A549 (cell line): ENCODE measurements at regions of chr2 and their contacts with region 1.

Region 1: DNA sequence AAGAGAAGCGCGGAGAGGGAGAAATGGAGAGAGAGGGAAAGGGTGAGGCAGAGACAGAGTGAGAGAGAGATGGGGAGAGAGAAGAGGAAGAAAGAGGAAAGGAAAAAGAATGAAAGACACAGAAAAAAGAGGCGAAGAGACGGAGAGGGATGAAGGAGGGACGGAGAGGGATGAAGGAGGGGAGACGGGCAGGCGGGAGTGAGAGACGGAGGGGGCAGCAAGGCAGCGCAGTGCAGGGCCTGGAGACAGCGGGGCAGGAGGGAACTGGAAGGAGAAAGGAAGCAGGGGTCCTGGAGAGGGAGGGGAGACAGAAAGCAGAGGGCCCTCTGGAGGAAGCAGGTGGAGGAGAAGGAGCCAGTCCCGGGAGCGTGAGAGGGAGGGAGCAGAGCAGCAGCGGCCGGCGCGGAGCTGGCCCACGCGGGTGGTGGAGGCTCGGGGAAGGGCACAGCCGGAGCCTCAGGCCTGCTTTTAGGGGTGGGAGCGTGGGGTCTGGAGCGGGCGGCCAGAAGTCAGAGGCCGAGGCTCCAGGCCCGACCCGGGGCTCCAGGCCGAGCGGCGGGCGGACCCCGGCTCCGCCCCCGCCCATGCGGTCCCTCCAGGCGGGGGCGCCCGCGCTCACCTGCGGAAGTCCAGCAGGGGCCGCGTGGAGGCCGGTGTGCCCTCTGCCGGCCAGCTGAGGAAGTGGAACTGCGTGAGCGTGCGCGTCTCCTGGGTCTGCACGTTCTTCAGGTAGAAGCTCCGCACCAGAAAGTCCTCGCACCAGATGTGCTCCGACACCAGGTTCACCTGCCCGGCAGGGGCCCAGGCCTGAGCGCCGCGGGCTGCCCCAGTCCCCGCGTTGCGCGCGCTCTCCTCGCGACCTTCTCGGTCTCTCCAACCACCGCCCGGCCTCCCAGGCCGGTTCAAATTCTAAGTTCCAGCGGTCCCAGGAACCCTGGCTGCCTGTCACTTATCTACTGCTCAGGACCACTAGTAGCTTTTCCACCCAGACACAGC is 14.5 kb downstream of the PTPRN start:
- DNase-seq: peak; percentile 87 to 91
- ATAC-seq: peak; percentile 69 to 89
- H3K4me3 ChIP-seq: peak overlapping the region; percentile 48
- H3K27ac ChIP-seq: peak overlapping the region; percentile 94 to 99
- H3K4me1 ChIP-seq: peaks cover 23% of the 10 kb centered on the region
- CTCF ChIP-seq: peak; percentile 100
- EP300 ChIP-seq: 0 out of 5 replicates have a peak, but pooled peaks of 1 of the 2 experiments have one; percentile 10
- POLR2A ChIP-seq: peak; percentile 56
- RAD21 ChIP-seq: peak; percentile 74 to 93

Region 2: DNA sequence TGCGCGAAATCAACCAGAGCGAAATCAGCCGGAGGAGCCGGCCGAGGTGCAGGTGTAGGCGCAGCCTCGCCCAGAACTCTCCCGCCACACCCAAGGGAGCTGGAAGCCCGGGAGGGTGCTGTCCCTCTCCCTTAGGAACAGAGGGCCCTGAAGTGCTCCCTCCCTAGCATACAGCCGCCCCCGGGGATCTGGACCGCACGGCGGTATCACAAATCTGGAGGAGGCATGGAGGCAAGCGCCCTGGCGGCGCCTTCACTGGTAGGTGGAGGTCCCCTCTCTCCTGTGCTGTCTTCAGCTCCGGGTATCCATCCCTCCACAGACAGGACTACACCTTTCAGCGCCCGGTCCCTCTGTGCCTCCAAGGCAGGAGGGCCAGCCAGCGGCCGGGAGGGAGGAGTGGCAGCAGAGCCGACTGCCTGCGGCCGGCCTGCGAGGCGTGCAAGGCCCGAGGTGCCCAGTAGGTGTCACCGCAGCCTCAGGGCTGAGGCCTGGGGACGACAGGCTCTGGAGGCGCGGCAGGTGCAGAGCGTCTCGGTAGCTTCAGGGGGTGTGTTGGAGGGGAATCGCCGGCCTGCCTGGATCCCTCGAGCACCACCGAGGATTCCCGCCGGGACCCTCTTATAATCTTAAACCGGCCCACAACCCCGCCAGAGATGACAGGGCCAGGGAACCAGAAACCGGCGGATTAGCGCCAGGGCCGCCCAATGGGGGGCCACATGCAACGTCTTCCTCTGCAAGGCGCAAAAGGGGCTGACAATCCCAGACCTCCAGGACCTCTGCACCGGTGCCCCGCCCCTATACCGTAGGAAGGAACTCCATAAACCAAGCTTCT is 236.7 kb before region 1 on chr2:
- CTCF ChIA-PET with region 1: interaction called, 14 read pairs
- POLR2A ChIA-PET with region 1: no interaction called
- DNase-seq: peak in 1 of 2 experiments; percentile 60
- ATAC-seq: peak; percentile 72 to 86
- H3K4me3 ChIP-seq: peak overlapping the region; percentile 53; the same call in 2 of the 3 replicates
- H3K27ac ChIP-seq: no peak overlapping the region
- H3K4me1 ChIP-seq: peaks cover 26% of the 10 kb centered on the region
- CTCF ChIP-seq: peak; percentile 80
- EP300 ChIP-seq: no peak
- POLR2A ChIP-seq: no peak
- RAD21 ChIP-seq: peak; percentile 80 to 91

Region 3: GRCh38 chr2:219199470-219200211 is 95.0 kb before region 1 on chr2:
- CTCF ChIA-PET with region 1: interaction called, 15 read pairs
- POLR2A ChIA-PET with region 1: no interaction called
- DNase-seq: no peak
- ATAC-seq: peak in 1 of 2 experiments; percentile 16; a peak in 1 of 6 replicates
- H3K4me3 ChIP-seq: no peak overlapping the region
- H3K27ac ChIP-seq: no peak overlapping the region
- H3K4me1 ChIP-seq: no peaks in the 10 kb centered on the region
- CTCF ChIP-seq: no peak
- EP300 ChIP-seq: no peak
- POLR2A ChIP-seq: no peak
- RAD21 ChIP-seq: no peak

Region 4: DNA sequence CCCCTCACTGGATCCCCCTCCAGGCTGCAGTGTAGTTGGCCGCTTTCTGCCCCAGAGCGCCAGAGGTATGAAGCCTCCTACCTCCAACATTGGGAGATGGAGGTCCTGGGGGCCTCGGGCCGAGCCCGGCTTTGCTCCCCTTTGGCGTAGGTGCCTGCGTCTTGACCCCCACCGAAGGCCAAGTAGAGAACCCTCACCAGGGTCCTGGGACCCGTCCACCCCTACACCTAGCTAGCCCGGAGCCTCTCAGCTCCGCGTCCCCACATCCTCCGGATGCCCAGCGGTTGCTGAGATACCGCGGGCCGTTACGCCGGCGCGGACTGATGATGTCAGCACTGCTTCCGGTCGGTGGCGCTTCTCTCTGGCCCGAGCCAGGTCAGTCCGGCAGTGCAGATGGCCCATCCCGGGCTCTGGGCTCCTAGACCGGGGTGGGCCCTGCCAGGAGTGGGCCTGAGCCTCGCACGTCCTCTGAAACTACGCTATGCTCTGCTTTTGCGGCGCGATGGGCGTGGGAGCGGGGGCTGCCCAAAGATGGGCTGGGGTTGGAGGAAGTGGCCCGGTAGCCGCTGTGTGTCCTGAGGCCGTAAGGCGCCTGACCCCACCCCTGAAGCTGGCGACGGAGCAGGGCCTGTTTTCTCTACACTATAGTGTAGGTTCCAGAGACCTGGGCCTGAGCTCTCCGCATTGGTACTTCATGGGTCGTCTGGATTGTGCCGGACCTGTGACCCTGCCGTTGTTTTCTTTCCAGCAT is 49.3 kb before region 1 on chr2 and contains the starts of genes GLB1L and STK16:
- CTCF ChIA-PET with region 1: interaction called, 241 read pairs
- POLR2A ChIA-PET with region 1: interaction called, 10 read pairs
- DNase-seq: peak; percentile 94
- ATAC-seq: peak; percentile 64 to 82
- H3K4me3 ChIP-seq: peak within 1 kb of the TSS; percentile 78
- H3K27ac ChIP-seq: peak within 1 kb of the TSS; percentile 90 to 96
- H3K4me1 ChIP-seq: peaks cover 50% of the 10 kb centered on the region
- CTCF ChIP-seq: no peak
- EP300 ChIP-seq: no peak
- POLR2A ChIP-seq: peak; percentile 74
- RAD21 ChIP-seq: no peak; a peak in 1 of 5 replicates
- polyA plus RNA-seq, gene GLB1L: 8.7 and 10.0 TPM in 2 replicates
- polyA plus RNA-seq, gene STK16: 43.3 and 53.0 TPM in 2 replicates

Region 5: GRCh38 chr2:219278655-219279516 is 15.8 kb before region 1 on chr2 and contains the start of gene DNAJB2:
- CTCF ChIA-PET with region 1: interaction called, 540 read pairs
- POLR2A ChIA-PET with region 1: interaction called, 15 read pairs
- DNase-seq: peak; percentile 97
- ATAC-seq: peak; percentile 74 to 85
- H3K4me3 ChIP-seq: peak within 1 kb of the TSS; percentile 66
- H3K27ac ChIP-seq: peak within 1 kb of the TSS; percentile 96 to 99
- H3K4me1 ChIP-seq: peaks cover 58% of the 10 kb centered on the region
- CTCF ChIP-seq: no peak
- EP300 ChIP-seq: peak; percentile 29 to 75; a peak in 1 of 5 replicates
- POLR2A ChIP-seq: peak; percentile 52
- RAD21 ChIP-seq: no peak; a peak in 1 of 5 replicates
- polyA plus RNA-seq, gene DNAJB2: 25.6 and 31.0 TPM in 2 replicates

Region 6: DNA sequence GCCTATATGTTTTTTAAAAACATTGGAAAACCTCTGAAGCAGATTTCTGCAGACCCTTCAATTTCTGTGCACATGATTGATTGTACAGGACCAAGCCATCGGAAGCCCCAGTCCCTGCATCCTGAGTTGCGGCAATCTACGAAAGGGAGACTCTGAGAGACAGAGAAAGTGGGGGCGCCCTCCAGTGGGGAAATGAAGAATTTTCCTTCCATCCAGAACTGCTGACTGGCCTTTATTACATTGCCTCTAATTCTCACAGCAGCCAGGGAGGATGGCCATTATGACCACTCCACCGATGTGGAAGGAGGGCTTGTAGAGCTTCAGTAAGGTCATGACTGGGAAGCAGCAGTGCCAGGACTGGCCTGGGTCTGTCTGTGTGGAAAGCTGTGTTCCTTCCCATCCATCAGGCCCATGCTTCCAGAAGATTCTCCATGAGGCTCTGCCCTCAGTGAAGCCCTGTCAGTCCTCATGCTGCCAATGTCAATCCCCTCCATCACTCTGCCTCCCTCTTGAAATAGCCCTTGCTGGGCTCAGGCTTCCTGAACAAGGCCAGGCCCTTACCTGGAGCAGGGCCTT is 57.9 kb after region 1 on chr2:
- CTCF ChIA-PET with region 1: interaction called, 24 read pairs
- POLR2A ChIA-PET with region 1: no interaction called
- DNase-seq: peak; percentile 62 to 68
- ATAC-seq: peak; percentile 79 to 92
- H3K4me3 ChIP-seq: no peak overlapping the region
- H3K27ac ChIP-seq: no peak overlapping the region
- H3K4me1 ChIP-seq: peaks cover 1% of the 10 kb centered on the region; the same call in 2 of the 3 replicates
- CTCF ChIP-seq: peak; percentile 66
- EP300 ChIP-seq: no peak
- POLR2A ChIP-seq: no peak
- RAD21 ChIP-seq: peak; percentile 58 to 61

Region 7: DNA sequence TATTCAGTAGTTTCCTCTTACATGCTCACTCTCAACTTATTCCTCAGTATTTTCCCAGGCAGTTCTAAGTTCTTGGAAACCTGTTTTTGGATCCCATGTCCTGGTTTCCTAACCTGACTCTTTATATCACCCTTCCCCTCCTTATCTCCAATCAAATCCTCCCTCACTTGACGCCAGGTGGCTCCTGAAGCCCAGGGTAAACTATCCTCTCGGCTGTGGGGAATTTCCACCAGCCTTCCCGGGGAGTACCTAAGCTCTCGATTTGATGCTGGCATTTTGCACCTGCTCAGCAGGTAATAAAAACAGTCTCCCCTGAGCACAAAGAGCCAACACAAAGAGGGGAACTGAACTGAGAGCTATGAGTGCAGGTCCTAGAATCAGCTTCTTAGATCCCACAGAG is 870.7 kb after region 1 on chr2:
- CTCF ChIA-PET with region 1: no interaction called
- POLR2A ChIA-PET with region 1: no interaction called
- DNase-seq: peak in 1 of 2 experiments; percentile 19
- ATAC-seq: peak in 1 of 2 experiments; percentile 67; a peak in 3 of 6 replicates
- H3K4me3 ChIP-seq: no peak overlapping the region
- H3K27ac ChIP-seq: no peak overlapping the region
- H3K4me1 ChIP-seq: no peaks in the 10 kb centered on the region
- CTCF ChIP-seq: peak; percentile 24; the same call in 1 of the 3 replicates
- EP300 ChIP-seq: no peak
- POLR2A ChIP-seq: no peak
- RAD21 ChIP-seq: peak; percentile 50 to 59; a peak in 4 of 5 replicates